T-cell (primary cell): ENCODE measurements at regions of chr1 and their contacts with region 1.

Region 1: GRCh38 chr1:205273551-205273982 is 45.8 kb downstream of the TMCC2 start:
- DNase-seq: peak; percentile 66 to 92 (median 83)
- ATAC-seq: peak; percentile 74 to 84 (median 77)
- H3K4me3 ChIP-seq: peak overlapping the region in 1 of 2 donors; percentile 12
- H3K4me3 Mint-ChIP-seq: peak overlapping the region; percentile 39 to 65 (median 53)
- H3K27ac ChIP-seq: no peak overlapping the region
- H3K27ac Mint-ChIP-seq: peak overlapping the region; percentile 78 to 86
- H3K4me1 ChIP-seq: peaks cover 28 to 49% of the 10 kb centered on the region in 2 experiments
- H3K4me1 Mint-ChIP-seq: peaks cover 45 to 47% (median 47%) of the 10 kb centered on the region in 3 donors
- H3K27me3 ChIP-seq: peaks cover 0 to 12% of the 10 kb centered on the region in 2 experiments
- H3K27me3 Mint-ChIP-seq: no peaks in the 10 kb centered on the region

Region 2: DNA sequence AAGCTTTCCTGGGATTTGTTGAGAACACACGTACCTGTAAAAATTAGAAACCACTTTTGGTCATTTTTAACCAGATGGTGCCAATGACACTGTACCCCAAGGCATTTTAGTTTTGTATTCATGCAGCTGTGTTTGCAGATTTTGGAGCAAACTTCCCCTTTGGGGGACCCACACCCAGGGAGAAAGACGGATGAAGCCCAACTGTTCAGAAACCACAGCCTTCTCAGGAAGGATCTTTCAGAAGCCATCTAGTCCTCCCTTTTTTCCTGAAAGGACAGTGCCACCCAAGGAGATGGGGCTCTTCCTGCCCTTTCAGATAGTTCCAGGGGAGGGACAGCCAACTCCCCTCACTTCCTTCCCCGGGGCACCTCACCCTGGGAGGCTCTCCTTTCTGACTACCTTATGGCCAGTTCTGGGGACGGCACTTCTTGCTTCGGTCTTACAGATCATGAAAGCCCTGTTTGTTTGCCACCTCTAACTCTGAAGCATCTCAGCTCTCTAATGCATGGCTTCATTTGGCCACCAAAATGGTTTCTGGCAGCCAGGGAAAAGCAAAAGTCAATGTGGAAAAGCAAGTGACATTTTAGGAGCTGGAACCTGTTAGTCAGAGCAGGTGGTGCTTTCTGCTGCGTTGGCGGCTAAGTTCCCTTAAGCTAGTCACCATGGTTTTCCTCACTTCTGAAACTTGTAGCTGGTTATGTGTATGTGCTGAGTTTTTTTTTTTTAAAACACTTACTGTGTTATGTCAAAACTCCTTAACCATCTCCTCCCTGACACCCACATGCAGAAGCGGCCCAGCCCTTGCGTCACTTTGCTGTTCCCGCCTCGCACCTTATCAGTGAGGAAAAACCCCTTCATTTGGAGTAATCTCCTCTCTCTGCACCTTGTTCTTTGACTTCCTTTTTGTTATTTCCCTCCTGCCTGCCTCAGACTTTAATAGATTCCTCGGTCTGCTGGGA is 35.8 kb before region 1 on chr1:
- CTCF ChIA-PET with region 1: no interaction called
- POLR2A ChIA-PET with region 1: no interaction called
- DNase-seq: no peak
- ATAC-seq: peak in 1 of 4 experiments; percentile 43
- H3K4me3 ChIP-seq: no peak overlapping the region
- H3K4me3 Mint-ChIP-seq: no peak overlapping the region
- H3K27ac ChIP-seq: no peak overlapping the region
- H3K27ac Mint-ChIP-seq: no peak overlapping the region
- H3K4me1 ChIP-seq: peaks cover 0 to 4% of the 10 kb centered on the region in 2 experiments
- H3K4me1 Mint-ChIP-seq: peaks cover 2 to 9% (median 7%) of the 10 kb centered on the region in 3 donors
- H3K27me3 ChIP-seq: peaks cover 0 to 3% of the 10 kb centered on the region in 2 experiments
- H3K27me3 Mint-ChIP-seq: peaks cover 0 to 3% of the 10 kb centered on the region in 2 donors

Region 3: DNA sequence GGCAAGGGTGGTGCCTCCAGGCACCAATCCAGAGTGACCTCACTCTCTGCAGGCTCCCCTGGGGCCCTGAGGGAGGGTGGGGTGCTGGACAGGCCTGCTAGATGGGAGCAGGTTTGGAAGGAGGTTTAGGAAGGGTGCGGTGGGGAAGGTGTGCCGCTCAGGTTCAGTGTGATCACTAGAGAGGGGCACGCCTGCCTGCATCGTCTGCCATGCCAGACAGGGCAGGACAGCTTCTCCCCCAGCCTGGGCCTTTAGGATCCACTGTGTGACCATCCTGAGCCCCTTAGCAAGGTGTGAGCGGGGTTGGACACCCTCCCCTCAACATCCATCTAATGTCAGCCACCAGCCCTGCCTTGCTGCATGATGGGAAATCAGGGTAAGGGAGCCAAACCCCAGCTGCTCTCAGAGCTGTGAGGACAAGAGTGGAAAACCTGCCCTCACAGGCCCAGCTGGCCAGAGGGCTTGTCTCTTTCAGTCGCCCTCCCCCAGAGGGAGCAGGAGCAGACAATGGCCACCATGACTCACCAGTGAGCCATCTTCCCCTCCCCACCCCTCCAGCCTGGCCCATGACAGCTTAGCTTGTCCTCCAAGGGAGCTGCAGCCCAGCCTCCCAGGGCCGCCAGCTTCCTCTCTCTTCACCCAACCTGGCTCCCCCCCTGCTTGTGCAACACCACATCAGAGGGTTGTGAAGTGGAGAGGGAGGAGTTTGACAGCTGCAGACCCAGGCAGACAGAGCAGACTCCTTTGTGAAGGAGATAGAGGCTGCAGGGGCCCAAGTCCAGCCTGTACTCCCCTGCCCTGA is 11.0 kb after region 1 on chr1:
- CTCF ChIA-PET with region 1: interaction called, 4 to 31 read pairs
- POLR2A ChIA-PET with region 1: interaction called, 3 to 5 read pairs
- DNase-seq: peak; percentile 80 to 94 (median 88)
- ATAC-seq: peak; percentile 70 to 77 (median 76)
- H3K4me3 ChIP-seq: peak overlapping the region; percentile 34 to 60
- H3K4me3 Mint-ChIP-seq: peak overlapping the region; percentile 72 to 90 (median 78)
- H3K27ac ChIP-seq: peak overlapping the region; percentile 86
- H3K27ac Mint-ChIP-seq: peak overlapping the region; percentile 94 to 95
- H3K4me1 ChIP-seq: peaks cover 57 to 88% of the 10 kb centered on the region in 2 experiments
- H3K4me1 Mint-ChIP-seq: peaks cover 82 to 92% (median 87%) of the 10 kb centered on the region in 3 donors
- H3K27me3 ChIP-seq: no peaks in the 10 kb centered on the region
- H3K27me3 Mint-ChIP-seq: no peaks in the 10 kb centered on the region

Region 4: DNA sequence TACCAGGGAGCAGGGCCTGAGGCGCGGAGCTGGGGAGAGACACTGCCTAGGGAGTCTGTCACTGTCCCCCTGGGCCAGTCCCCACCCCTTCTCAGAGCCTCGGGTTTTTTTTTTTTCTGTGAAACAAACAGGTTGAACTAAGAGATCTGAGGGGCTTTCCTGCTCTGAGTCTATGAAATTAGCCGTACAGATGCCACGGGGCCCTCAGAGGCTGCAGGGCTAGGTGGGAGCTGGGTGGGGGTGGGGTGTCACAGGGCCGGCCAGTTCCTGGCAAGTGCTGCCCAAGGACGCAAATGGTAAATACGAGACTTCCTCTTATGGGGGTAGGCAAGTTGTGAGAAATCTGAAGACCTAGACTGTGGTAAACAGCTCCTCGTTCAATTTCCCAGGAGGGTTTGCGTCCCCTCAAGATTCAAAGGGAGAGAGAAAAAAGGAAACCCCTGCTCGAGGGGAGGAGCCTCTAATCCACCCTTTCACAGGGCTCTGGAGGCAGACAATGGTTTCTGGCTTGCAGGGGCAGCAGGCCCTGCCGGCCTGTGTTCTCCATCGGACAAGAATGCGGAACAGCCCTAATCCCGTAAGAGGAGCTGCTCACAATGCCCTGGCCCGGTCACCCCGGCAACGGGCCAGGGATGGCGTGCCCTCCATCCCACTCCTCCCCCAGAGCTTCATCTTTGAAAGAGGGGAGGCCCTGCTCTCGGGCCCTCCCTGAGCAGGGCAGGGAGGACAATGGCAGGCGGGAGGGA is 40.2 kb after region 1 on chr1:
- CTCF ChIA-PET with region 1: interaction called, 3 to 249 read pairs
- POLR2A ChIA-PET with region 1: interaction called in 1 of 2 experiments, 3 read pairs
- DNase-seq: peak in 34 of 35 experiments; percentile 7 to 75 (median 40)
- ATAC-seq: peak; percentile 62 to 87 (median 68)
- H3K4me3 ChIP-seq: peak overlapping the region; percentile 44 to 45
- H3K4me3 Mint-ChIP-seq: peak overlapping the region; percentile 82 to 95 (median 84)
- H3K27ac ChIP-seq: peak overlapping the region; percentile 66
- H3K27ac Mint-ChIP-seq: peak overlapping the region; percentile 95
- H3K4me1 ChIP-seq: peaks cover 54 to 90% of the 10 kb centered on the region in 2 experiments
- H3K4me1 Mint-ChIP-seq: peaks cover 92 to 97% (median 93%) of the 10 kb centered on the region in 3 donors
- H3K27me3 ChIP-seq: no peaks in the 10 kb centered on the region
- H3K27me3 Mint-ChIP-seq: no peaks in the 10 kb centered on the region

Region 5: GRCh38 chr1:205321164-205321958 is 47.8 kb after region 1 on chr1 and contains the start of gene NUAK2:
- CTCF ChIA-PET with region 1: interaction called, 47 to 249 read pairs
- POLR2A ChIA-PET with region 1: interaction called, 3 to 4 read pairs
- DNase-seq: peak; percentile 66 to 90 (median 80)
- ATAC-seq: peak; percentile 90 to 93 (median 90)
- H3K4me3 ChIP-seq: peak within 1 kb of the TSS; percentile 97 to 100
- H3K4me3 Mint-ChIP-seq: peak within 1 kb of the TSS; percentile 95 to 99 (median 98)
- H3K27ac ChIP-seq: peak within 1 kb of the TSS; percentile 50
- H3K27ac Mint-ChIP-seq: peak within 1 kb of the TSS; percentile 93
- H3K4me1 ChIP-seq: peaks cover 30 to 76% of the 10 kb centered on the region in 2 experiments
- H3K4me1 Mint-ChIP-seq: peaks cover 60 to 90% (median 73%) of the 10 kb centered on the region in 3 donors
- H3K27me3 ChIP-seq: peaks cover 0 to 6% of the 10 kb centered on the region in 2 experiments
- H3K27me3 Mint-ChIP-seq: no peaks in the 10 kb centered on the region
- total RNA-seq, gene NUAK2: 15.0 to 38.7 (median 32.7) TPM

Region 6: GRCh38 chr1:205485338-205486228 is 212.0 kb after region 1 on chr1:
- CTCF ChIA-PET with region 1: interaction called in 1 of 2 experiments, 14 read pairs
- POLR2A ChIA-PET with region 1: no interaction called
- DNase-seq: peak; percentile 42 to 85 (median 60)
- ATAC-seq: peak; percentile 60 to 81 (median 70)
- H3K4me3 ChIP-seq: no peak overlapping the region
- H3K4me3 Mint-ChIP-seq: no peak overlapping the region
- H3K27ac ChIP-seq: no peak overlapping the region
- H3K27ac Mint-ChIP-seq: no peak overlapping the region
- H3K4me1 ChIP-seq: peaks cover 0 to 31% of the 10 kb centered on the region in 2 experiments
- H3K4me1 Mint-ChIP-seq: peaks cover 21 to 34% (median 29%) of the 10 kb centered on the region in 3 donors
- H3K27me3 ChIP-seq: peaks cover 2 to 52% of the 10 kb centered on the region in 2 experiments
- H3K27me3 Mint-ChIP-seq: peaks cover 40 to 50% of the 10 kb centered on the region in 2 donors